Activated naive CD4-positive, alpha-beta T cell treated with anti-CD3 and anti-CD28 coated beads for 36 hours (primary cell): ENCODE measurements at regions of chr7 and their contacts with region 1.

Region 1: DNA sequence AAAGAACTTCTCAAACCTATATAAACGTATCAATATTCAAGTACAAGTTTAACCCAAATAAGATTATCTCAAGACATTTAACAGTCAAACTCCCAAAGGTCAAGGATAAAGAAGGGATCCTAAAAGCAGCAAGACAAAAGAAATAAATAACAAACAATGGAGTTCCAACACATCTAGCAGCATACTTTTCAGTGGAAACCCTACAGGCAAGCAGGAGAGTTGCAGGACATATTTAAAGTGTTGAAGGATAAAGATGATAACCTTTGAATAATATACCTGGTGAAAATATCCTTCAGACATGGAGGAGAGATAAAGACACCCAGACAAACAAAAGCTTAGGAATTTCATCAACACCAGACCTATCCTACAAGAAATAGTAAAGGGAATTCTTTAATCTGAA is 82.8 kb downstream of the TES start:
- DNase-seq: no peak
- H3K4me3 Mint-ChIP-seq: no peak overlapping the region
- H3K27ac Mint-ChIP-seq: no peak overlapping the region
- H3K4me1 Mint-ChIP-seq: no peaks in the 10 kb centered on the region
- H3K27me3 Mint-ChIP-seq: peaks cover 17% of the 10 kb centered on the region

Region 2: DNA sequence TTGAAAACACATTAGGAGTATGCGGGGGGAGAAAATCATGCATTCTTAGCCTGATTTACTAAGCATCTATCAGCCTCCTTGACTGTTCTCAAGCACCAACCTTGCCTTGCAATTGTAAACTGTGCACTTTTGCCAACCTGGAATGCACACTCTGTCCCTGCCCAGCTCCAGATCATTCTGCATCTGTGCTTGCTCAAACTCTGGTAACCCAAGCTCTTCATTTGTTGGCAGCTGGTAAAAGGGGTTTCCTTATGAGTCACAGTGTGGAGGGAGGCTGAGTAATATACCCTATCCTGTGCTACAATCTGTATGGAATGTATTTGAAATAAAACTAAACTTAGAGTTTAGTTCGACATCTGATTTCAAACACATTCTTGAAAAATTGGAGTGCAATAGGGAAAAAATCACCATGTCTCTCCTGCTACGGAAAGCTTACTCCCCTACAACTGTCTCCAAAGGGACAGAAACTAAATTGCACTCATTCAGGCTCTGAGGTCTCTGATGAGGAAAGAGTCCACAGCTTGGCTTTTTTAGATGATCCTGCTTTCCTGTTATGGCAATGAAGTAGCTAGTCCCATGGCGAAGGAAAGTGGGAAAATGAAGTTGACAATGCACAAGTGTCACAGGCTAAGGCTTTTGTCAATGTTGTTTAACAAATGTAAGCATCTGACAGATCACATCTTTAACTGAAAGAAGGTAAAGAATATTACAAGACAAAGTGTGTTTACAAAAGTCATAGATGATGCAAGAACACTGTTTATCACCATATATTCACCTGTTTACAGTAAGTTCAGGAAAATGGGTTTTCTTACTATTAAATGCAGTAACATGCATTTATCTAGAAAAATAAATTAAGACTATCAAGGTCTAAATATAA is 20.9 kb before region 1 on chr7:
- CTCF ChIA-PET with region 1: no interaction called
- intact Hi-C with region 1: loop called (anchors 2 kb)
- DNase-seq: peak; percentile 19
- H3K4me3 Mint-ChIP-seq: no peak overlapping the region
- H3K27ac Mint-ChIP-seq: no peak overlapping the region
- H3K4me1 Mint-ChIP-seq: no peaks in the 10 kb centered on the region
- H3K27me3 Mint-ChIP-seq: peaks cover 5% of the 10 kb centered on the region

Region 3: GRCh38 chr7:117068511-117069145 is 775.5 kb after region 1 on chr7:
- CTCF ChIA-PET with region 1: no interaction called
- intact Hi-C with region 1: no loop called
- DNase-seq: peak; percentile 14
- H3K4me3 Mint-ChIP-seq: no peak overlapping the region
- H3K27ac Mint-ChIP-seq: no peak overlapping the region
- H3K4me1 Mint-ChIP-seq: peaks cover 19% of the 10 kb centered on the region
- H3K27me3 Mint-ChIP-seq: no peaks in the 10 kb centered on the region